A673 (cell line): ENCODE measurements at regions of chr12 and their contacts with region 1.

Region 1: DNA sequence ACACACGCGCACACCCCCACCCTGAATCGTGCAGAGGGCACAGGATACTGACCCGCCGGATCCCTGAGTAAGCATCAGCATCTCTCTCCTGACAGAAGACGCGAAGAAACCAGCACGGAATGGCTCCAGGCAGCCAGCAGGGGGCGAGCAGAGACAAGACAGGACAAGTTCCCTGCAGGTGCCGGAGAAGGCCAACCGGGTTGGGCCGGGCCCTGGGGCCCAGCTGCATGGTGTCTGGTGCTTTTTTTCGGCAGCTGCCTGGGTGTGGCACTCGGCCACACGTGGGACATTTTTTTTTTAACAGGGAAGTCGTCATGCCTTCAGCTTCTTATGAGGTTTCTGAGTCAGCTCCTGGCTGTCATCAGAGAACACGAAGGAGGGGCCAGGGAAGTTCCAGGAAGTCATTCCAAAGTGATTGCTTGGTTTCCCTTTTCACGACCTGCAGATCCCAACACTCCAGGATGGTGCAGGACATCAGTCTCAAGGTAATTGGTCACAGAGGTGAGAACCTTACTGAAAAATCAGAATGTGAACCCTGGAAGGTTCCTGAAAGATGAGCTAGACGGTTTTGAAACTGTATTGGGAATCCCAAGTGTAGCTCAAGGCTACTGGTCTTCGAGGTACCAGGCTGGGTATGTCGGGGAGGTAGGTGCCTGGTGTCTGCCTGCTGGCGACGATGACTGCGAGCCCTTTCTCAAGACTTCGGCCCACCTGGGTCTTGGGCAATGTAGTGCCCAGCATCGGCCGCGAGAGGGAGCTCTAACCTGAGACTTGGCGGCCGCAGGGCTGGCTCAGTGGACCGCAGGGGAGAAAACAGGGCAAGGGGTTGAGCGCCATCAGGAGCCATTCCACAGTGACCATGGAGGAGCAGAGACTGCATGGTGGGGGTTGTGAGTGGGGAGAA is 190.8 kb upstream of the PRMT8 start:
- DNase-seq: peak; percentile 87
- H3K4me3 ChIP-seq: no peak overlapping the region
- H3K27ac ChIP-seq: no peak overlapping the region
- H3K4me1 ChIP-seq: peaks cover 5% of the 10 kb centered on the region
- H3K27me3 ChIP-seq: peaks cover 10% of the 10 kb centered on the region
- CTCF ChIP-seq: peak; percentile 93

Region 2: DNA sequence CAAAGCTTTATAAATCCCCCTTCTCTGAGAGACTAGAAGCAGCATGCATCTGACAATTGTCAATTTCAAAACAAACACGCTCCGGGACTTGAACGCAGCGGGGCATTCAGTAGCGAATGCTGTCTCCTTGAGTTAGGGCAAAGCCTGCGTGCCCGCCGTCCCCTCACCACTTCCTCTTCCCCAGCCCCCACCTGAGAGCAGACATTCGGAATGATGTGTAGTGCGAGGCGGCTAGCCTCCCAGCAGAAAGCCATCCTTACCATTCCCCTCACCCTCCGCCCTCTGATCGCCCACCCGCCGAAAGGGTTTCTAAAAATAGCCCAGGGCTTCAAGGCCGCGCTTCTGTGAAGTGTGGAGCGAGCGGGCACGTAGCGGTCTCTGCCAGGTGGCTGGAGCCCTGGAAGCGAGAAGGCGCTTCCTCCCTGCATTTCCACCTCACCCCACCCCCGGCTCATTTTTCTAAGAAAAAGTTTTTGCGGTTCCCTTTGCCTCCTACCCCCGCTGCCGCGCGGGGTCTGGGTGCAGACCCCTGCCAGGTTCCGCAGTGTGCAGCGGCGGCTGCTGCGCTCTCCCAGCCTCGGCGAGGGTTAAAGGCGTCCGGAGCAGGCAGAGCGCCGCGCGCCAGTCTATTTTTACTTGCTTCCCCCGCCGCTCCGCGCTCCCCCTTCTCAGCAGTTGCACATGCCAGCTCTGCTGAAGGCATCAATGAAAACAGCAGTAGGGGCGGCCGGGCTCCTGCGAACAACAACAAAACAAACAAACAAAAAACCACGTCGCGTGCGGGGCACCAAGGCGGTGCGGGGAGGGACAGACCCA is 193.1 kb after region 1 on chr12:
- CTCF ChIA-PET with region 1: interaction called, 10 read pairs
- POLR2A ChIA-PET with region 1: no interaction called
- intact Hi-C with region 1: no loop called
- DNase-seq: no peak
- H3K4me3 ChIP-seq: no peak overlapping the region
- H3K27ac ChIP-seq: no peak overlapping the region
- H3K4me1 ChIP-seq: no peaks in the 10 kb centered on the region
- H3K27me3 ChIP-seq: peaks cover 98% of the 10 kb centered on the region
- CTCF ChIP-seq: no peak

Region 3: GRCh38 chr12:3533703-3534386 is 233.7 kb after region 1 on chr12:
- CTCF ChIA-PET with region 1: interaction called, 13 read pairs
- POLR2A ChIA-PET with region 1: no interaction called
- intact Hi-C with region 1: loop called (anchors 10 kb)
- DNase-seq: peak; percentile 20
- H3K4me3 ChIP-seq: no peak overlapping the region
- H3K27ac ChIP-seq: no peak overlapping the region
- H3K4me1 ChIP-seq: no peaks in the 10 kb centered on the region
- H3K27me3 ChIP-seq: peaks cover 3% of the 10 kb centered on the region
- CTCF ChIP-seq: no peak

Region 4: GRCh38 chr12:3777206-3777809 is 477.1 kb after region 1 on chr12:
- CTCF ChIA-PET with region 1: interaction called, 4 read pairs
- POLR2A ChIA-PET with region 1: no interaction called
- intact Hi-C with region 1: loop called (anchors 2 kb)
- DNase-seq: peak; percentile 47
- H3K4me3 ChIP-seq: no peak overlapping the region
- H3K27ac ChIP-seq: no peak overlapping the region
- H3K4me1 ChIP-seq: no peaks in the 10 kb centered on the region
- H3K27me3 ChIP-seq: peaks cover 13% of the 10 kb centered on the region
- CTCF ChIP-seq: peak; percentile 74

Region 5: DNA sequence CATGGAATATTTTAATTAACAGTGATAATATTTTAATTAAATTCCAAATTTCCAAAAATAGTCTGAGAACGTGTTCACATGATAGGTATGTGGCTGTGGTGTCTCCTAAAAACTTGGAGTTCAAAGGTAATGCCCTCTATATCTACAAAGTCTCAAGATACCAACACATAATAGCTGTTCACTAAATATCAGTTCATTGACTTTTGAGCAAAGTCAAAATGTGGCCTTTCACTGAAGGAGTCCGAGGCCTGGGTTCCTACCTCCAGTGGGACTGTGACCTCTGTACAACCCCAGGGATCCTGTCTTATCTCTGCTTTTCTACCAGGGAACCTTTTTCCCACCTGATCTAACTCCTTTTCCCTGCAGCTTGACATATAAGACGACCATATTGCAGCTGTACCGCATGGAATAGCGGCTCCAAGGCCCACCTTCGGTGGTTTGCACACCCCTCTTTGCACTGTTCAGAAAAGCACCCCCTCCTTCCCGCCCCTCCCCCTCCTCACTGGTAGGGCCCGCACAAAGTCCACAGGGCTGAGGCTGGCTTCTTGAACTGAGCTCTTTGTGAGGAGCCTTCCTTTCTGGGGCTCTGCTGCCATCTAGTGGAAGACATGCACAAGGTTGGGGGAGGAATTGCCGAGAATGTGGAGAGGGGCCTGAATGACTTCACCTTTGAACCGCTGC is 976.5 kb after region 1 on chr12:
- CTCF ChIA-PET with region 1: interaction called, 4 read pairs
- POLR2A ChIA-PET with region 1: no interaction called
- intact Hi-C with region 1: loop called (anchors 2 kb)
- DNase-seq: peak; percentile 87
- H3K4me3 ChIP-seq: no peak overlapping the region
- H3K27ac ChIP-seq: no peak overlapping the region
- H3K4me1 ChIP-seq: peaks cover 18% of the 10 kb centered on the region
- H3K27me3 ChIP-seq: peaks cover 60% of the 10 kb centered on the region
- CTCF ChIP-seq: peak; percentile 90